CD8-positive, alpha-beta T cell (primary cell): ENCODE measurements at regions of chr1 and their contacts with region 1.

Region 1: GRCh38 chr1:209755926-209756614 is at the start of gene TRAF3IP3:
- DNase-seq: peak; percentile 49 to 91 (median 79)
- ATAC-seq: peak; percentile 89
- H3K4me3 ChIP-seq: peak within 1 kb of the TSS; percentile 83 to 90
- H3K4me3 Mint-ChIP-seq: peak within 1 kb of the TSS; percentile 91
- H3K27ac ChIP-seq: peak within 1 kb of the TSS; percentile 79
- H3K27ac Mint-ChIP-seq: peak within 1 kb of the TSS; percentile 96
- H3K4me1 ChIP-seq: peaks cover 72% of the 10 kb centered on the region
- H3K4me1 Mint-ChIP-seq: peaks cover 81% of the 10 kb centered on the region
- H3K27me3 ChIP-seq: no peaks in the 10 kb centered on the region
- H3K27me3 Mint-ChIP-seq: no peaks in the 10 kb centered on the region
- CTCF ChIP-seq: no peak
- total RNA-seq, gene TRAF3IP3: 209 to 230 TPM

Region 2: GRCh38 chr1:208962867-208963266 is 793.2 kb before region 1 on chr1:
- CTCF ChIA-PET with region 1: no interaction called
- POLR2A ChIA-PET with region 1: no interaction called
- intact Hi-C with region 1: no loop called
- DNase-seq: no peak
- ATAC-seq: no peak
- H3K4me3 ChIP-seq: no peak overlapping the region
- H3K4me3 Mint-ChIP-seq: no peak overlapping the region
- H3K27ac ChIP-seq: no peak overlapping the region
- H3K27ac Mint-ChIP-seq: no peak overlapping the region
- H3K4me1 ChIP-seq: no peaks in the 10 kb centered on the region
- H3K4me1 Mint-ChIP-seq: no peaks in the 10 kb centered on the region
- H3K27me3 ChIP-seq: no peaks in the 10 kb centered on the region
- H3K27me3 Mint-ChIP-seq: peaks cover 3% of the 10 kb centered on the region
- CTCF ChIP-seq: no peak

Region 3: GRCh38 chr1:209490013-209490412 is 266.1 kb before region 1 on chr1:
- CTCF ChIA-PET with region 1: no interaction called
- POLR2A ChIA-PET with region 1: no interaction called
- intact Hi-C with region 1: no loop called
- DNase-seq: no peak
- ATAC-seq: no peak
- H3K4me3 ChIP-seq: no peak overlapping the region
- H3K4me3 Mint-ChIP-seq: no peak overlapping the region
- H3K27ac ChIP-seq: no peak overlapping the region
- H3K27ac Mint-ChIP-seq: no peak overlapping the region
- H3K4me1 ChIP-seq: no peaks in the 10 kb centered on the region
- H3K4me1 Mint-ChIP-seq: no peaks in the 10 kb centered on the region
- H3K27me3 ChIP-seq: no peaks in the 10 kb centered on the region
- H3K27me3 Mint-ChIP-seq: peaks cover 3% of the 10 kb centered on the region
- CTCF ChIP-seq: no peak

Region 4: GRCh38 chr1:209618756-209619420 is 137.2 kb before region 1 on chr1:
- CTCF ChIA-PET with region 1: no interaction called
- POLR2A ChIA-PET with region 1: no interaction called
- intact Hi-C with region 1: no loop called
- DNase-seq: peak in 2 of 9 experiments; percentile 17 to 42
- ATAC-seq: no peak
- H3K4me3 ChIP-seq: no peak overlapping the region
- H3K4me3 Mint-ChIP-seq: no peak overlapping the region
- H3K27ac ChIP-seq: no peak overlapping the region
- H3K27ac Mint-ChIP-seq: no peak overlapping the region
- H3K4me1 ChIP-seq: no peaks in the 10 kb centered on the region
- H3K4me1 Mint-ChIP-seq: peaks cover 10% of the 10 kb centered on the region
- H3K27me3 ChIP-seq: no peaks in the 10 kb centered on the region
- H3K27me3 Mint-ChIP-seq: peaks cover 3% of the 10 kb centered on the region
- CTCF ChIP-seq: no peak

Region 5: GRCh38 chr1:209769171-209769904 is 13.3 kb after region 1 on chr1:
- CTCF ChIA-PET with region 1: interaction called, 88 read pairs
- POLR2A ChIA-PET with region 1: interaction called, 377 read pairs
- intact Hi-C with region 1: loop called (anchors 1 kb)
- DNase-seq: peak; percentile 33 to 87 (median 76)
- ATAC-seq: peak; percentile 72
- H3K4me3 ChIP-seq: peak overlapping the region; percentile 72 to 88
- H3K4me3 Mint-ChIP-seq: no peak overlapping the region
- H3K27ac ChIP-seq: peak overlapping the region; percentile 75 to 76
- H3K27ac Mint-ChIP-seq: no peak overlapping the region
- H3K4me1 ChIP-seq: peaks cover 68% of the 10 kb centered on the region
- H3K4me1 Mint-ChIP-seq: peaks cover 44% of the 10 kb centered on the region
- H3K27me3 ChIP-seq: no peaks in the 10 kb centered on the region
- H3K27me3 Mint-ChIP-seq: no peaks in the 10 kb centered on the region
- CTCF ChIP-seq: no peak

Region 6: GRCh38 chr1:209784265-209785169 is 28.4 kb after region 1 on chr1 and contains the start of gene C1orf74:
- CTCF ChIA-PET with region 1: interaction called, 3 read pairs
- POLR2A ChIA-PET with region 1: interaction called, 377 read pairs
- intact Hi-C with region 1: loop called (anchors 1 to 2 kb)
- DNase-seq: peak; percentile 98 to 100 (median 99)
- ATAC-seq: peak; percentile 95
- H3K4me3 ChIP-seq: peak within 1 kb of the TSS; percentile 64 to 70
- H3K4me3 Mint-ChIP-seq: peak within 1 kb of the TSS; percentile 92
- H3K27ac ChIP-seq: peak within 1 kb of the TSS; percentile 85 to 95
- H3K27ac Mint-ChIP-seq: peak within 1 kb of the TSS; percentile 98
- H3K4me1 ChIP-seq: peaks cover 17% of the 10 kb centered on the region
- H3K4me1 Mint-ChIP-seq: peaks cover 32% of the 10 kb centered on the region
- H3K27me3 ChIP-seq: no peaks in the 10 kb centered on the region
- H3K27me3 Mint-ChIP-seq: no peaks in the 10 kb centered on the region
- CTCF ChIP-seq: no peak
- total RNA-seq, gene C1orf74: 0.71 to 0.75 TPM

Region 7: DNA sequence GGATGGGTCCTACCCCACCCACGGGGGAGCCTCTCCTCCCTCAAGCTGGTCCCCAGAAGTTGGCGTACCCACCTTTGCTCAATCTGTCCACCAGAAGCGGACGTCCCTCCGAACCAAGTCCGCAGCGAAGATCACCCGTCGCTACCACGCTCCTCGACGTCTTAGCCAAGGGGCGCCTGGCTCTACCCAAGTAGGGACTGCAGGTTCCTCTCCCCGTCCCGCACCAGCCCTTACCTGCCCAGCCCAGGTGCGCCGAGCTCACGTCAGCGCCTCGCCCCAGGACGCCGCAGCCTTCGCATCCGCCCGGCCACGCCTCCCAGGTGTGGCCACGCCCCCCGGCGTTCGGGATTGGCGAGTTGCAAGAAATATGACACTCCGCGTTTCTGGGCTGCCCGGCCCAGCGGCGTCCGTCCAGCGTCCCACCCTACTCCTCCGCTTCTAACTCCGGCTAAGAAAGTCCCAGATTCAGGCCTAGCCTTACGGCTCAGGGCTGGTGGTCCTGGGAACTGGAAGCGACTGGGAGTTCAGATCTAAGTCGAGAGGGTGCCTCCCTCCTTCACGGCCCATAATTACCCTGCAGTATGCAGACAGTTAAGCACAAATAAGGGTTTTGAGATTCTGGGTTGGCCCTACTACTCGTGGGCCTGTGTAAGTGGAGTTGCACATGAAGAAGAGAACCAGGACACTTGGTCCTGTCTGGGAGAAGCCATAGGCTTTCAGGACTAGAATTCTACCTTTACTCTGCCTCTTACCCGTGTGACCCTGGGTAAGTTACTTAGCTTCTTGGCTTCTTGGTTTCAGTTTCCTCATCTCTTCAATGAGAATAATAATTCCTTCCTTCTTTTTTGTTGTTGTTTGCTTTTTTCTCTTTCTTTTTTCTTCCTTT is 50.0 kb after region 1 on chr1 and contains the start of gene IRF6:
- CTCF ChIA-PET with region 1: no interaction called
- POLR2A ChIA-PET with region 1: no interaction called
- intact Hi-C with region 1: loop called in 1 of 2 experiments (anchors 2 kb)
- DNase-seq: peak; percentile 44 to 84 (median 72)
- ATAC-seq: peak; percentile 96
- H3K4me3 ChIP-seq: peak within 1 kb of the TSS; percentile 44 to 71
- H3K4me3 Mint-ChIP-seq: peak within 1 kb of the TSS; percentile 93
- H3K27ac ChIP-seq: peak within 1 kb of the TSS in 1 of 2 experiments; percentile 16
- H3K27ac Mint-ChIP-seq: peak within 1 kb of the TSS; percentile 86
- H3K4me1 ChIP-seq: peaks cover 12% of the 10 kb centered on the region
- H3K4me1 Mint-ChIP-seq: peaks cover 13% of the 10 kb centered on the region
- H3K27me3 ChIP-seq: no peaks in the 10 kb centered on the region
- H3K27me3 Mint-ChIP-seq: peaks cover 4% of the 10 kb centered on the region
- CTCF ChIP-seq: no peak
- total RNA-seq, gene IRF6: 2.5 to 3.4 TPM